CD4-positive, alpha-beta T cell (primary cell): ENCODE measurements at regions of chr10 and their contacts with region 1.

Region 1: DNA sequence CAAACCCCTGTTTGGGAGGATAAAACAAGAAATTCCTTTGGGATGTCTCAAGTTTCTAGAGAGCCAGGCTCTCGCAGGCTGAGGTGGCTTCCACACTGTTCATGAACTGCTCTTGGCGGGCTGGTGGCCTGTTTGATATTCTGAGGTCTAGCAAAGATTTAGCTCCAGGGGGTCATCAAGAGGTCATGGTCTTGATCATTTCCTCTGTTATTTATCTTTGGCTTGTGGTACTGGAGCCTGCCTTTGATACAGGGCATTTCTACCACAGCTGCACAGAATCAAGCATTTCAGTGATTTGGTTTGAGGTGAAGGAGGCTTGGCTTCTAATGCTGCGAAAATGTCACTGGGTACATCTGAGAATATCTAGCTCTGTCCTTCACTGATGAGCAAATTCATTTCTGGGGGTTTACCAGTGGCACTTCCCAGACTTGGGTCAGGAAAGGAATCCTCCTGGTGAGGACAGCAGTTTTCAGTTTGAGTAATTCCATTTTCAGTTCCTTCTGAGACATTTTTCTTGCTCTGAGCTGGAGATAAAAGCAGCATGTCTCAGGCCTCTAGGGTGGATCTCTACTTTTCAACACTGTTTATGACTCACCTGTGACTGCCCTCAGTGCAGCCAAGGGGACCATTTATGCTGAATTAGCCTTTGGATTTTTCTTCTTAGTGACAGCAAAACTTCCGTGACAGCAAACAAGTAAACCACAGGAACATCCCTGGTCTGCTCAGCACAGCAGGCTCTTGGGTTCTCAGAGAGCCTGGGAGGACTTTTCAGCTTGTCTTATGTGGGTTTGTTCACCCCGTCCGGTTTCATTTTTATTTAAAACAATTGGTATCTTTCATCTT is 312.0 kb downstream of the RNLS start:
- DNase-seq: peak in 12 of 14 experiments; percentile 4 to 77 (median 16)
- ATAC-seq: peak; percentile 73
- H3K4me3 ChIP-seq: peak overlapping the region; percentile 1
- H3K4me3 Mint-ChIP-seq: peak overlapping the region; percentile 75
- H3K27ac ChIP-seq: peak overlapping the region; percentile 25 to 33
- H3K27ac Mint-ChIP-seq: peak overlapping the region; percentile 80
- H3K4me1 ChIP-seq: peaks cover 32% of the 10 kb centered on the region
- H3K4me1 Mint-ChIP-seq: peaks cover 48% of the 10 kb centered on the region
- H3K27me3 ChIP-seq: no peaks in the 10 kb centered on the region
- H3K27me3 Mint-ChIP-seq: no peaks in the 10 kb centered on the region
- CTCF ChIP-seq: no peak

Region 2: GRCh38 chr10:88281592-88282347 is 10.7 kb after region 1 on chr10:
- CTCF ChIA-PET with region 1: no interaction called
- POLR2A ChIA-PET with region 1: interaction called, 12 read pairs
- intact Hi-C with region 1: no loop called
- DNase-seq: no peak
- ATAC-seq: no peak
- H3K4me3 ChIP-seq: no peak overlapping the region
- H3K4me3 Mint-ChIP-seq: no peak overlapping the region
- H3K27ac ChIP-seq: no peak overlapping the region
- H3K27ac Mint-ChIP-seq: no peak overlapping the region
- H3K4me1 ChIP-seq: peaks cover 9% of the 10 kb centered on the region
- H3K4me1 Mint-ChIP-seq: peaks cover 35% of the 10 kb centered on the region
- H3K27me3 ChIP-seq: no peaks in the 10 kb centered on the region
- H3K27me3 Mint-ChIP-seq: no peaks in the 10 kb centered on the region
- CTCF ChIP-seq: no peak